Activated CD4-positive, alpha-beta T cell treated with anti-CD3 and anti-CD28 coated beads for 36 hours (primary cell): ENCODE measurements at regions of chr14 and their contacts with region 1.

Region 1: DNA sequence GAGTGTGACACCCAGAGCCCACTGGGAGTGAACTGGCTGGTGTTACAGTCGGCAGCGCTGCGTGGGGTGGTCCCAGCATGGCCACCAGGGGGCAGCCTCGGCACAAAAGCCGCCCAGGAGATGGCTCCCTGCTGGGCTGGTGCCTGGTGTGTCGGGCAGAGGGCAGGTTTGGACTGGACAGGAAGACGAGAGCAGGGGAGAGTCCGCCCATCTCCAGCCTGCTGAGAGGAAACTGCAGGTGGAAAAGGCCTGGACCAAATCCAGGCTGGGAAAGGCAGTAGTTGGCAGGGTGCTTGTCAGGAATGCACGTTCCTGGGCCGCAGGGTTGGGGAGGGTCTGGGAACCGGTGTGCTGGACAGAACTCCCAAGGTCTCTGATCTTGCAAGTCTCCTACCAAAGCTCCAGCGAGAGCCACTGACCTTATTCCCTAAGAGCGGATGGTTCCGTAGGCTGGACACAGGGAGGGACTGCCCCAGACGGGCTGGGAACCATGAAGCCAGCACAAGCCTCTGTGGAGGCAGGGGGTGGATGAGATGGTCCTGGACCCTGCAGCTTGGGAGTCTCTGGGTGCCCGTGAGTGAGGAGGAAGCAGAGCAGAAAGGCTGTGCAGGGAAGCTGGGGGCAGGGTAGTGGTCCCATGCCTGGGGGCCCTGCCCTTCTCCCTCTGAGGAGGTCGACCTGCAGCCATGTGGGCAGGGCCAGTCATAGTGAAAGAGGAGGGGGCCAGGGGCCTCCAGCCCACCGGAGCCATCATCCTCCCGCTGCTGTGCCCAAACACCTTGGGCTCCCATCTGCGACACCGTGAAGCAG is 1.8 kb downstream of the AHNAK2 start:
- DNase-seq: peak; percentile 92
- ATAC-seq: peak; percentile 86
- H3K4me3 Mint-ChIP-seq: peak overlapping the region; percentile 19
- H3K27ac Mint-ChIP-seq: no peak overlapping the region
- H3K4me1 Mint-ChIP-seq: peaks cover 6% of the 10 kb centered on the region
- H3K27me3 Mint-ChIP-seq: peaks cover 16% of the 10 kb centered on the region

Region 2: DNA sequence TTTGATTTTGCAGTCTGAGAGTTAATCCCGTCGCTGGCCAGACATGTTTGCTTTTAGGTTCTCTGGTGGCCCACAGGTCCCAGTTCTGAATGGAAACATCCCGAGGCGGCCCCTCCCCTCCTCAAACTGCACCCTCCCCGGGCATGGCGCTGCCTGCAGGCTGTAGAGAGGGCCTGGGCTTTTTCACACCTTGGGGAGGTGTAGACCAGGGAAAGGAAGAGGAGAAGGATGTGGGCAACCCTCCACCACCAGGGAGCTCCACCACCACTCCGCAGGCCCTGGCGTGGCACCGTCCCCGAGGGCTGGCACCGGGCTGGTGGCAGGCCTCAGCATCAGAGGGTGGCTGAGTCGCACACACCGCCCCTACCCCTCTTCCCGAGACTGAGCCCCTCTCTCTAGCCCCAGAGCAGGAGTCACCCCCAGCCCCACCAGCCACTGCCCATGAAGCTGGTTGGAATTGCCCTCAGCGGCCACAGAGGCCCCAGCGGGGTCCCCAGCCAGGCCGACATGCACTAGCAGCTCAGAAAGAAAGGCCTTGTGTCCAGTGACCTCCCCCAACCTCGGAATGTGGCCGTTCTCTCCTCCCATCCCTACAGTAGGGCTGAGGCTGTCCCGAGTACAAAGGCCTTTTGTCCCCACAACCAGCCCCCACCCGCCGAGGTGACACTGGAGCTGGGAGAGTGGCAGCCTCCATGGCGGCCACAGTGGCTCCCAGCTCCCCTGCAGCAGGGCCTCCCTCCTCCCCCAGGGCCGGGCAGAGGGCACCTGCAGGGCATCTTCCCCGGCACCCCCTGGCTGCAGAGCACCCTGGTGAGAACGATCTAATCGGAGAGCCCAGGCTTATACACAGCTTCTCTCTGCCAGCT is 310.5 kb before region 1 on chr14:
- CTCF ChIA-PET with region 1: no interaction called
- POLR2A ChIA-PET with region 1: no interaction called
- intact Hi-C with region 1: no loop called
- DNase-seq: peak; percentile 71
- ATAC-seq: peak; percentile 93
- H3K4me3 Mint-ChIP-seq: no peak overlapping the region
- H3K27ac Mint-ChIP-seq: no peak overlapping the region
- H3K4me1 Mint-ChIP-seq: peaks cover 22% of the 10 kb centered on the region
- H3K27me3 Mint-ChIP-seq: peaks cover 5% of the 10 kb centered on the region

Region 3: DNA sequence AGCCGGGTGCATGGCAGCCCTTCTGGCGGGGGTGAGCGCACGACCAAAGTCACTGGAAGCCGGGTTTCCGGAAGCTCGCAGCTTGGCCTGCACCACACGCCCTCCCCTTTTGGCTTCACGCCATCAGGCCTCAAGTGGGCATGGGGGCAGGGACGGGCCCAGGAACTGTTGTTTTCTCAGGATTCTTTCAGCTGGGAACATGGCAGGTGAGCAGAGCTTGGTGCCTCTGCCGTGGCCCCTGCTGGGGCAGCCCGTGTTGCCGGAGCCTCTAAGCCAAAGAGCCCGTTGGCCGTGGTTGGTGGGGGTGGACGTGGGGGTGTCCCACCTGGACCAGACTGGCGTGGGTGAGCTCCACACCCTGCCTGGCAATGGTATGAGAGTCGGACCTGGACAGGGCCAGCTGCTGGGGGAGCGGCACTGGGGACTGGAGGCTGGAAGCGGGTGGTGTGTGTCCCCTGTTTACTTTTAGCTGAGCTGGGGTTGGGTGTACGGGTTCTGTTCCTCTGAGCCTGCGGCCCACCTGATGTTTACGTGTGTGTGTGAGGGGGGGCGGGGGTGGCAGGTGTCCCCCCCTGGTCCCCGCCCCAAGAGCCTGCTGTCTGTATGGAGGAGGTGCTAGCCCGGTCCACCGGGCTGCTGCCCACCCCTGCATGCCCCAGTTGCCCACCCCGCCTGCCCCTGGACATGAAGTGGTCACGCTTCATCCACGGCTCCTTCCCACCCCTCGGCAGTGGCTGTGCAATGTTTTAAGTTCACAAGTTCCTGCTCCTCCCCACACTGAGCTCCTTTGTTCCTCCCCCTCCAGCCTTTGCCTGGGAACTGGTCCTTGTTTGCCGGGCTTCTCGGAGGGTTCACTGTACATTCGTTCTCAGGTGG is 80.4 kb before region 1 on chr14:
- CTCF ChIA-PET with region 1: no interaction called
- POLR2A ChIA-PET with region 1: no interaction called
- intact Hi-C with region 1: loop called in 1 of 2 experiments (anchors 2 kb)
- DNase-seq: peak; percentile 5
- ATAC-seq: no peak
- H3K4me3 Mint-ChIP-seq: no peak overlapping the region
- H3K27ac Mint-ChIP-seq: no peak overlapping the region
- H3K4me1 Mint-ChIP-seq: peaks cover under 1% of the 10 kb centered on the region
- H3K27me3 Mint-ChIP-seq: no peaks in the 10 kb centered on the region

Region 4: DNA sequence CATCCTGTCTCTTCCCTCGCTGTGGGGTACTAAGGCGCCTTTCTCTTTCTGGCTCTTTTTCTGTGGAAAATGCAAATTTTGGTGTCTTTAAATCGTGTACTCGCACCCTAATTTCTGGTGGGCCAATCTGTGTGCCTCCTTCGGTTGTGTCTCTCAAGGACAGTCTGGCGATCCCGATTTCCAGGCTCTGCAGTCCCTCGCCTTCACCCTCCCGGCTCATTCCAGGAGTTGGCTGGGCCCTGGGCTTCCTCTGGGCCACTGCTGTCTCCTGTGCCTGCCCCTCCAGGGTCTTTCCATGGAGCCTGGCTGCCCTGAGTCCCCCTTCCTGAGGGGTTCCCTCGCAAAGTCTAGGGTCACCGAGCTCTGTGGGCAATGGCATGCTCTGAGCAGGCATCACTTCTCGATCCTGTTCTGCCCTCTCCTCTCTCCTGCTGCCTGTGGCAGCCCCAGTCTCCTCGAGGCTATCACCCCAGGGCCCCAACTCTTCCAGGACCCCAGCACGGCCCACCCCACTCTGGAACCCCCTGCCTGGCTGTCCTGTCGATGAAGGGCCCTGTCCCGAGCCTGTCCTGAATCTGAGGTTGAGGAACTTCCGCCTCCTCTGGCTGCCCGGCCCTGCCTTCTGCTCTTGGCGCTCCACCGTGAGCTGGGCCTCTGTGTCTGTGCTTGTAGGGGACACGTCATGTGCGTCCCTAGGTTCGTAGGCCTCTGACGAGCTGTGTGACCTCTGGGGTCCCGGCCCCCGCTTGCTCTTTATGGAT is 22.3 kb before region 1 on chr14:
- CTCF ChIA-PET with region 1: no interaction called
- POLR2A ChIA-PET with region 1: no interaction called
- intact Hi-C with region 1: no loop called
- DNase-seq: no peak
- ATAC-seq: no peak
- H3K4me3 Mint-ChIP-seq: no peak overlapping the region
- H3K27ac Mint-ChIP-seq: no peak overlapping the region
- H3K4me1 Mint-ChIP-seq: no peaks in the 10 kb centered on the region
- H3K27me3 Mint-ChIP-seq: peaks cover 15% of the 10 kb centered on the region

Region 5: DNA sequence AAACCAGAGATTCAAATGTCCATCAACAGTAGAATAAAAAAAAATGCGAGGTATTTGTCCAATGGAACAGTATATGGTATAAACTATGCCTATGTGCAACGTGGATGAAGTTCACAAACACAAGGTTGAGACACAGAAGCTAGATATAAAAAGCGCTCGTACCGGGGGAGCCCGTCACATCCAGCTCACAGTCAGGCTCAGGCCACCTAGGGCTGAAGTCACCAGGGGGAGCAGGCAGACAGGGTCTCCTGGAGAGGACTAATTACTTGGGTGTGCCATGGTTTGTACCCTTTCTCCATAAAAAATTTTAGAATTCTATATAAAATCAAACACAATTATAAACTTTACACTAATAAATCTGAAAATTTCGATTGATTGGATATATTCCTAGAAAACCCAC is 11.9 kb before region 1 on chr14:
- CTCF ChIA-PET with region 1: interaction called, 11 read pairs
- POLR2A ChIA-PET with region 1: no interaction called
- intact Hi-C with region 1: no loop called
- DNase-seq: no peak
- ATAC-seq: no peak
- H3K4me3 Mint-ChIP-seq: no peak overlapping the region
- H3K27ac Mint-ChIP-seq: no peak overlapping the region
- H3K4me1 Mint-ChIP-seq: no peaks in the 10 kb centered on the region
- H3K27me3 Mint-ChIP-seq: peaks cover 8% of the 10 kb centered on the region